Activated naive CD4-positive, alpha-beta T cell treated with anti-CD3 and anti-CD28 coated beads, Interleukin-2, amount 10 ng/mL, durations not matched to agents 7 days and 5 days (primary cell): ENCODE measurements at regions of chr18 and their contacts with region 1.

Region 1: DNA sequence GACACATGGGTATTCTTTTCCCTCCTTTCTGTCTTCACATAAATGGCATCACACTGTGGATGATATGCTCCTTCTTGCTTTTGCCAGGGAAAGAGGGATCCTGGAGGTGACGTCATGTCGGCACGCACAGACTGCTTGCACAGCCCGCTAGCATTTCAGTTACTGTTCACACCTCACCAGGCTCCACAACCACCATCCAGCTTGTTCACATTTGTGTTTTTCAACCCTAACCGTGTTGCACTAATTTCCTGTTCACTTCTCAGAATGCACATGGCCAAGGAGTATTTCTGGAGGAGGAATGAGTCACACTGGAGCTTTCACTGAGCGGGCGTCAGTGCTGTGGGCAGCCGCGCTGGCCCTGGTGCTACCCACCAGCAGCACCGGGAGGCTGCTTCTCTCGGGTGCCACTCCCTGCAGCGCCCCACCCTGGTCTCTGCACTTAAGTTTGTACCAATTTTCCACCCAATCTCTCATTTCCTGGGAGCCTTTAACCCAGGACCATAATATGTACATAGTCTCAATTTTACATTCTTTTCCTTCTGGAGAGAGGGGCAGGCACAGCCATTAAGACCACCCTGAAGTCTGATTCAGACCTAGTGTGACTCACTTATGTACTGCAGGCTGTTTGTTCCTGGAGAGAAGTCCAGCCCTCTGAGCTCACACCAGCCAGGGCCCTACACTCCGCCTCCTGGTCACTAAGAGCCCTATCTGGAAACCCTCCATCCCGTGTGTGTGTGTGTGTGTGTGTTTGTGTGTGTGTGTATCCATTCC is 65.1 kb downstream of the MBP start:
- DNase-seq: peak; percentile 75
- H3K4me3 Mint-ChIP-seq: peak overlapping the region; percentile 60
- H3K27ac Mint-ChIP-seq: peak overlapping the region; percentile 100
- H3K4me1 Mint-ChIP-seq: peaks cover 100% of the 10 kb centered on the region
- H3K27me3 Mint-ChIP-seq: no peaks in the 10 kb centered on the region

Region 2: DNA sequence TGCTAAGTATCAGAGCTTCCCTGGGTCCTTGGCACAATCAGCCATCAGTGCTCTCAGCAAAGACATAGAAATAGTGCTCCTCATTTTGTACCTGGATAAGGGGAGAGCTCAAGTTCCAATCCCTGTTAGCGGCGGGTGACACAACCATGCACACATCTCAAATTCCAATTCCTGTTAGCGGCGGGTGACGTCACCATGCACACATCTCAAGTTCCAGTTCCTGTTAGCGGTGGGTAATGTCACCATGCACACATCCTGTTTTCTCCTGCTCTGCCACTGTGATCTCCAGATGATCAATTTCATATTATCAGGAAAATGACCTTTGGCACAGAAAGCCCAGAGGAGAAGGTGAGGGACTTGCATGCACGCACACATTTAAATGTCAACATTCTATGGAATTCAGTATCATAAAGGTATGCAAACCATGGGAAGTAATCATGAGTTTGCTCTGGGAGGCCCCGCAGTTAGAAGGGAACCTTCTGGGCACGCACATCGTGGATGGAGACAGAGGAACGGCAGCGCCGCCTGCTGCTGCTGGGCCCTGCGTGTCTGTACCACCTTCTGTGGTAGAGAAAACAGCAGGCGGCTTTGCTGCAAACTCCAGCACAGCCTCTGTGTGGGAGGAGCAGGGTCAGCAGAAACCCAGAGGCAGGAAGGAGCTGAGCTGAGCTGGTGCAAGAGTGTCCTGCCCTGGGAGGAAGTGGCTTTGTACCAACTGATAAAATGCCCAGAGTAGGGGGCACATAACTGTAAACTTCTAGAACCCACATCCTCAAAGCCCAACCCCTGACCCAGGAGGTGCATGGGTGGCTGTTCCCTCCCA is 12.7 kb before region 1 on chr18:
- CTCF ChIA-PET with region 1: interaction called, 22 read pairs
- DNase-seq: peak; percentile 90
- H3K4me3 Mint-ChIP-seq: peak overlapping the region; percentile 82
- H3K27ac Mint-ChIP-seq: peak overlapping the region; percentile 97
- H3K4me1 Mint-ChIP-seq: peaks cover 73% of the 10 kb centered on the region
- H3K27me3 Mint-ChIP-seq: no peaks in the 10 kb centered on the region

Region 3: DNA sequence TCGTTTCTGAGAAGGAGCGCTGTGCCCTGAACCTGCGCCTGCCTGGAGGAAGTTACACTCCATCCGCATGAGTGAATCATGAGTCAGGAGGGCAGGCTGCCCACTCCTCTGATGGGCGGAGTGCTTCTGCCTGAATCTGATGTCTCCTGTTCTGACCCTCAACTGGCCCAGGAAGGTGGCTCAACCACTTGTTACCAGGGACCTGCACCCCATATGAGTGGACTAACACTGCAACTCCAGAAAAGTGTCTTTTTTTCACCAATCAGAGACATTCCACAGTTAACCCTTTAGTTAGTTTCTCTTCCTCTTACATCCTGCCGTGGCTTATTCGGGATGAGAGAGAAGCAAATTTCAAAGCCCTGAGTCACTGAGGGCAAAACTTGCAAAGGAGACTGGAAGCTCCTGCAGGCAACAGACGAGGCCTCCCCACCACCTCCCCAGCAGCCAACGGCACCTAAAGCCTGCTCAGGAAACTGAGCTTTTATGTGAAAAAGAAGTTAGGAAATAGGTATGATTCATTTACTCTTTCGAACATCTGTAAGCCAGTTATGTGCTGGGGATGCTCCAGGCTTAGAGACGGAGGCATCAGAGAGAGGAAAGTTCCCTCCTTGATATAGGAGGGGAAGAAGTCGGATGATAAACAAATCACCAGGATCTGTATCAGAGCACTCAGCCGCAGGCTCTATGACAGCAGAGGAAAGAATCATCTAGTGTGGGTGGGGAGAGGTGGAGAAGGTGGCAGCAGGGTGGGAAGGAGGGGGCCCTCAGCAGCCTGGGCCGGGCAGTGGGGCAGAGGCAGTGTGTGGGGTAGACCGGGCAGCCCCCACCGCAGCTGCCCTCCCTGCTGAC is 34.2 kb after region 1 on chr18:
- CTCF ChIA-PET with region 1: interaction called, 17 read pairs
- DNase-seq: peak; percentile 57
- H3K4me3 Mint-ChIP-seq: peak overlapping the region; percentile 74
- H3K27ac Mint-ChIP-seq: peak overlapping the region; percentile 100
- H3K4me1 Mint-ChIP-seq: peaks cover 97% of the 10 kb centered on the region
- H3K27me3 Mint-ChIP-seq: no peaks in the 10 kb centered on the region

Region 4: DNA sequence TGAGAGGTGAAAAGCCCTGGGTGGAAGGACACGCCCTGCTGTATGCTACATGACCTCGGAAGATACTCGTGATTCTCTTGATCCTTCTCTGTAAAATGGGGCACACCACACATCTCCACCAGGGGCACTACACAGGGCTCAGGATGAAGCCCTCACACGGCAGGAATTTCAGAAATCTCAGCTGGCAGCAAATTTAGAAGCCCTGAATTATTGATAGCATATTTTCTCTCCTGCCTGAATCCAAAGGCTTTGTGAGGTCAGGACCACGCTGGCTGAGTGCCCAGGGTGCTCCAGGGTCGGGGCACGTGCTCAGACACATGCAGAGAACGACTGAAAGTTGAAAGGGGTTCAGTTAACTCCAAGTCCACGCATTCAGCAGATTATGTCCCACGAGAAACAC is 140.1 kb after region 1 on chr18:
- CTCF ChIA-PET with region 1: interaction called, 24 read pairs
- DNase-seq: peak; percentile 54
- H3K4me3 Mint-ChIP-seq: no peak overlapping the region
- H3K27ac Mint-ChIP-seq: no peak overlapping the region
- H3K4me1 Mint-ChIP-seq: peaks cover 50% of the 10 kb centered on the region
- H3K27me3 Mint-ChIP-seq: peaks cover 23% of the 10 kb centered on the region